CD4-positive, alpha-beta memory T cell (primary cell): ENCODE measurements at regions of chr11 and their contacts with region 1.

Region 1: GRCh38 chr11:9534791-9535781 is 38.4 kb upstream of the WEE1 start:
- DNase-seq: peak; percentile 63 to 73 (median 66)
- H3K4me3 ChIP-seq: no peak overlapping the region
- H3K4me3 Mint-ChIP-seq: no peak overlapping the region
- H3K27ac ChIP-seq: no peak overlapping the region
- H3K27ac Mint-ChIP-seq: peak overlapping the region in 2 of 7 donors; percentile 7 to 43
- H3K4me1 ChIP-seq: no peaks in the 10 kb centered on the region
- H3K4me1 Mint-ChIP-seq: peaks cover 0 to 2% (median 0%) of the 10 kb centered on the region in 4 donors
- H3K27me3 ChIP-seq: no peaks in the 10 kb centered on the region
- H3K27me3 Mint-ChIP-seq: no peaks in the 10 kb centered on the region

Region 2: DNA sequence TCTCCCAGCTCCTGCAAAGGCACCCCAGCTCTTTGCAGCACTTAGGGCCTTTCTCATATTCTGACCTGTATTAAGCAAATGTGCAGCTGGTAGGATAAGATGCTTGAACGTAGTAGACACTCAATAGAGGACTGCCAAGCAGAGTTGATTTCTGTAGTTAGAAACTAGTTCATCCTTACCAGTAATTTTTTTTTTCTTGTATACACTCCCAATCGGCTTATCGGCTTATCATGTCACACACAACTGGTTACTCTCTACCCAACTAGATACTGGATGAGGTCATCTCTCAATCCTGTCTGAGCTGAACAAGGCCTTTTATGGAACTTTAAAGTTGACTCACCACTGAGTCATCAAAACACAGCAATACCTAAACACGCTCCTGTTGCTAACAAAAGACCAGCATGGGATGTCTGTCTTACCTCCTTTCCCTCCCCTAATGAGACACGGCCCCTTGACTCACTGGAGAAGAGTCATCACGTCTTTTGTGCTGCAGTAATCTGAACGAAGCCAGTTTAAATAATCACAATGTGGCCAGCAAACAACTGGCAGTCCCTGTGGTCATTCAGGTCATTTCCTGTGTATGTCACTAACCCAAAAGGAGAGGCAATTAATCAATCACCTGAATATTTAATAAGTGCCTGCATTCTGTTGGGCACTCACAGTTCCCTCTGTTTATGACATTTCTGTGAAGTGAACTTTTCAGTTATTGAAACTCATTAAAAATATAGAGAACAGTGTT is 30.9 kb after region 1 on chr11:
- CTCF ChIA-PET with region 1: interaction called, 10 read pairs
- POLR2A ChIA-PET with region 1: no interaction called
- intact Hi-C with region 1: no loop called
- DNase-seq: peak; percentile 34 to 85 (median 42)
- H3K4me3 ChIP-seq: no peak overlapping the region
- H3K4me3 Mint-ChIP-seq: peak overlapping the region in 3 of 8 donors; percentile 3 to 59 (median 18)
- H3K27ac ChIP-seq: no peak overlapping the region
- H3K27ac Mint-ChIP-seq: peak overlapping the region; percentile 5 to 87 (median 78)
- H3K4me1 ChIP-seq: peaks cover 25% of the 10 kb centered on the region
- H3K4me1 Mint-ChIP-seq: peaks cover 17 to 34% (median 21%) of the 10 kb centered on the region in 4 donors
- H3K27me3 ChIP-seq: no peaks in the 10 kb centered on the region
- H3K27me3 Mint-ChIP-seq: no peaks in the 10 kb centered on the region

Region 3: GRCh38 chr11:9590717-9591116 is 55.6 kb after region 1 on chr11:
- CTCF ChIA-PET with region 1: interaction called, 16 read pairs
- POLR2A ChIA-PET with region 1: no interaction called
- intact Hi-C with region 1: no loop called
- DNase-seq: no peak
- H3K4me3 ChIP-seq: no peak overlapping the region
- H3K4me3 Mint-ChIP-seq: no peak overlapping the region
- H3K27ac ChIP-seq: no peak overlapping the region
- H3K27ac Mint-ChIP-seq: no peak overlapping the region
- H3K4me1 ChIP-seq: no peaks in the 10 kb centered on the region
- H3K4me1 Mint-ChIP-seq: no peaks in the 10 kb centered on the region
- H3K27me3 ChIP-seq: no peaks in the 10 kb centered on the region
- H3K27me3 Mint-ChIP-seq: no peaks in the 10 kb centered on the region

Region 4: GRCh38 chr11:9748361-9748970 is 213.4 kb after region 1 on chr11:
- CTCF ChIA-PET with region 1: interaction called, 69 read pairs
- POLR2A ChIA-PET with region 1: no interaction called
- intact Hi-C with region 1: loop called (anchors 2 kb)
- DNase-seq: peak; percentile 44 to 66 (median 54)
- H3K4me3 ChIP-seq: no peak overlapping the region
- H3K4me3 Mint-ChIP-seq: no peak overlapping the region
- H3K27ac ChIP-seq: no peak overlapping the region
- H3K27ac Mint-ChIP-seq: no peak overlapping the region
- H3K4me1 ChIP-seq: no peaks in the 10 kb centered on the region
- H3K4me1 Mint-ChIP-seq: no peaks in the 10 kb centered on the region
- H3K27me3 ChIP-seq: no peaks in the 10 kb centered on the region
- H3K27me3 Mint-ChIP-seq: no peaks in the 10 kb centered on the region

Region 5: GRCh38 chr11:10322830-10323792 is 788.0 kb after region 1 on chr11:
- CTCF ChIA-PET with region 1: interaction called, 6 read pairs
- POLR2A ChIA-PET with region 1: no interaction called
- intact Hi-C with region 1: loop called (anchors 1 kb)
- DNase-seq: peak; percentile 48 to 81 (median 50)
- H3K4me3 ChIP-seq: no peak overlapping the region
- H3K4me3 Mint-ChIP-seq: peak overlapping the region in 2 of 8 donors; percentile 3 to 18
- H3K27ac ChIP-seq: no peak overlapping the region
- H3K27ac Mint-ChIP-seq: peak overlapping the region in 3 of 7 donors; percentile 46 to 76 (median 64)
- H3K4me1 ChIP-seq: peaks cover 5% of the 10 kb centered on the region
- H3K4me1 Mint-ChIP-seq: peaks cover 0 to 2% (median under 1%) of the 10 kb centered on the region in 4 donors
- H3K27me3 ChIP-seq: peaks cover 4% of the 10 kb centered on the region
- H3K27me3 Mint-ChIP-seq: peaks cover 8 to 15% of the 10 kb centered on the region in 2 donors